Tibial artery (tissue), 4 donors: ENCODE measurements at regions of chr10 and their contacts with region 1.

Region 1: DNA sequence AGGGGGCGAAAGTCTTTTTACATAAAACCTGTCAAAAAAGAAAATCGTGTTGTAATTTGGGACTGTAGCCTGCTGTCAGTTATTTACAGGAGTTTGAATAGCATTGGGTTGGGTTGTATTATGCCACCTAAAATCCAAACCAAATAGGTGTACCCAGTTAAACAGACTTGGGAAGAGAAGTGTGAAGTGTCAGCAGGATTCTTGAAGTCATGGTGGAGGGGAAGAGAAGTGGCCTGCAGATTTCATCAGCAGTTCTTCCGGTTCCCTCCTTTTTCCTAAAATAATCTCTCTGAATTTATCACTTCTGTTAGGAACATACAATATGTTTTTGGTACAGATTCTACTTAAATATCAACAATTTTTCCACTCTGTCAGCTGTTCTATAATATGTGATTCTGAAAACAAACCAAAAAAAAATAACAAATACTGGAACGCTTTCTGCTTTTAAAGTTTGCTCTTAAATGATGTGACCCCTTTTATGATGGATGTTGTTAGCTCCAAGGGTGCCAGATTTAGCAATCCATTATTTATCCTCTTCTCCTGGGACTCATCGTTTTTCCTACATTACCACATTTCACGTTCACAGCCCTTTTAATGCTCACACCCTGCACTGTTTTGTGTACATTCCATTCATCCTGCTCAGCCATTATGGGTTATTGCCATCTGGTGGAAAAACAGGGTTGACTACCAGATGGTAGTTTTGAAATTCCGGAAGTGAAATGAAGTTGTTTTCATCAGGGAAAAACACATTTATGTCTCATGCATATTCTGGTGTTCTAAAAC is 18.7 kb upstream of the ARHGAP12 start:
- DNase-seq: peak in 1 of 2 donors; percentile 50
- H3K4me3 ChIP-seq: peak overlapping the region; percentile 30 to 37
- H3K27ac ChIP-seq: peak overlapping the region; percentile 49 to 63
- H3K4me1 ChIP-seq: peaks cover 0 to 17% (median 9%) of the 10 kb centered on the region in 4 donors
- H3K27me3 ChIP-seq: no peaks in the 10 kb centered on the region
- CTCF ChIP-seq: peak; percentile 48 to 62

Region 2: GRCh38 chr10:31864834-31865518 is 82.4 kb before region 1 on chr10:
- intact Hi-C with region 1: loop called (anchors 10 kb)
- DNase-seq: no peak
- H3K4me3 ChIP-seq: no peak overlapping the region
- H3K27ac ChIP-seq: peak overlapping the region in 1 of 2 donors; percentile 6
- H3K4me1 ChIP-seq: peaks cover 0 to 34% (median 9%) of the 10 kb centered on the region in 4 donors
- H3K27me3 ChIP-seq: no peaks in the 10 kb centered on the region
- CTCF ChIP-seq: no peak

Region 3: DNA sequence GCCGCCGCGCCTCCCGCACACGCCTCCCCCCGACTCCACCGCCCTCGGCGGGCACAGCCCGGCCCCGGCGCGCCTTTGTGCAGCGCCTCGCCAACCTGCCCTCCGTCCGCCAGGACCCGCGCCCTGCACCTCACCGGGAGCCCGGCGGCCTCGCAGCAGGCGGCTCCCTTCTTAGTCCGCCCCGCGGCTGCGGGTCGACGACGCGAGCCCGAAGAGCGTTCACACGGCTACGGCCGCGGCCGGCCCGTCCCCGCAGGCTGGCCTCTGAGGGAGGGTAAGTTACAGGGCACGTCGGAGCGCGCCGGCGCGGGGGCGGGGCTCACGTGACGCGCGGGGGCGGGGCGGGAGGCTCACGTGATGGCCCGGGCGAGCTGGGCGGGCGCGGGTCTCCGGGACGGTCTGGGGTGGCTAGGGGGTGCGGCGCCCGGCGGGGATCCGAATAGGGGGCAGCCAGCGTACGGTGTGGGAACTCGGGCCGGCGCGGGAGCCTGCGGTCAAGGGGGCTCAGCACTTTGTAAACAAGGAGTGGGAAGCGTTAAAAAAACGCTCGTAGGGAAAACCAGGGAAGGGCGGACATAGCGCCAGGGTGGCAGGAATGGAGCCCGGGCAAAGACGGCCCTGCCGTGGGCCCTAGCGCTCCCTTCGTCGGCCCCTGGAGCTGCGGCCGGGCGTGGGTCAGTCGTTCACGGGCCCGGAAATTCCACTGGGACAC is 18.6 kb before region 1 on chr10 and contains the start of gene ARHGAP12:
- intact Hi-C with region 1: no loop called
- DNase-seq: peak; percentile 89 to 95
- H3K4me3 ChIP-seq: peak within 1 kb of the TSS; percentile 75 to 85
- H3K27ac ChIP-seq: peak within 1 kb of the TSS; percentile 94 to 96
- H3K4me1 ChIP-seq: peaks cover 0 to 33% (median 12%) of the 10 kb centered on the region in 4 donors
- H3K27me3 ChIP-seq: no peaks in the 10 kb centered on the region
- CTCF ChIP-seq: no peak